ENCODE measurements at regions of chr12 and their contacts with region 1.

Region 1: DNA sequence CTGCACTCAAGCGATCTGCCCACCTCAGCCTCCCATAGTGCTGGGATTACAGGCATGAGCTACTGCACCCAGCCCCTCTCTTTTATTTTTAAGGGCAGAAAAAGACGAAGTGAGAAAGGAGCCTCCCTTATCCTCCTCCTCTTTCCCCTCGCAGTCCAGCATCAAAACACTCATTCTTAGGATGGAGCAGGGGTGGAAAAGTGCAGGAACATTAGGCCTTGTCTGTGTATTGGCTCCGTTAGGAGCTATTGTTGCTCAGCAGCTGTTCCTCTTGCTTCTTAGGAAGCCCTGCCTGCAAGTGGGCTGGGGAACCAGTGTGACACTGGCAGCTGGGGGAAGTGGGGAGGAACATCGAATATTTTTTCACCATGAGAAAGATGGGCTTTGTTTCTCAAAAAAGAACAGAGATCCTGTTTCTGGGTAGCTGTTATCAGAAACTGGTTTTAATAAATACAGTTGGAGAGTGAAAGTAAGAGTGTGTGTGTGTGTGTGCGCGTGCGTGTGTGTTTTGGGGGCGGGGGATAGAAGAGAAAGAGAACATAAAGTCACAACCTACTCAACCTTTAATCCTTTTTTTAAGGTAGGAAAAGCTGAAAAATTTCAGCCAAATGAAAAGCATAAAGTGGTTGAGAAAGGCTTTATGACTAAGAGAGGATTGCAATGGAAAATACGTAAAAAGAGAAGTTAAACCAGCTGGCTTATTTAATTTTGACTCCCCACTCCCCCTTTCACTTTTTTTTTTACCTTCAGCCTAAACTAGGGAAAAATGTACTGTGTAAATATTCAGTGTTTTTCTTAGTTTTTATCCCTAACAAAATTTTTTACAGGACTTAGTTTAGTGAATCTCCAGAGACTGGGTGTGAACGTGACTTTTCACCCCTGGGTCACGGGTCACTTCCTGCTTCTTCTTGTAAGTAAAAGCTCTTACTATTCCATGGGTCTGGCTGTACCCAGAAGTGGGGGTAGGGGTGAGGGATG is 197.2 kb upstream of the PLEKHG7 start:
- DNase-seq: peak; percentile 86
- ATAC-seq: peak; percentile 41
- H3K4me3 ChIP-seq: peak overlapping the region; percentile 46
- H3K27ac ChIP-seq: peak overlapping the region; percentile 100
- H3K4me1 ChIP-seq: peaks cover 53% of the 10 kb centered on the region
- H3K27me3 ChIP-seq: no peaks in the 10 kb centered on the region
- CTCF ChIP-seq: no peak
- EP300 ChIP-seq: peak; percentile 15 to 44; a peak in 2 of 4 replicates
- POLR2A ChIP-seq: peak; percentile 56; the same call in 1 of the 2 replicates
- RAD21 ChIP-seq: no peak

Region 2: DNA sequence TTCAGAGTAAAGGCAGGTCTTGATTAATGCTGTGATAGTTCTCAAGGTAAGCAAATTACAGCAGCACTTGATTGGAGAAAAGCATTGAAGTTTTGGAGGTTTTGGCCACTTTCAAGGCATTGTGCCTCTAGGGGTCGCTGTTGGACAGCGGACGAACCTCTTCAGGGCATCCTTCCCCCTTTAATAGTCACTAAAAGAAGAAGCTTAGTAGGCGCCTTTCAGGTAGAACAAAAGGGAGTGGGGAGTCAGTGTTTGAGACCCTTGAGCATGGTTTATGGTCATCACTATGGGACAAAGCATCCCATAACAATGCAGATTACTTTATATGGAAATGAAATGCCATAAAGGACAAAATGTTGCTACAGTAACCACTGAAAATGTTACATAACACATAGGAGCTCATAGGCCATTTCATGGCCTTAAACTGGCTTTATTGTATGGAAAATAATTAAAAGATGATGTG is 1123.4 kb before region 1 on chr12:
- CTCF ChIA-PET with region 1: interaction called, 6 read pairs
- POLR2A ChIA-PET with region 1: no interaction called
- RAD21 ChIA-PET with region 1: interaction called, 21 read pairs
- SMC1A ChIA-PET with region 1: interaction called, 3 read pairs
- in situ Hi-C with region 1: no loop called
- intact Hi-C with region 1: no loop called
- DNase-seq: peak; percentile 54
- ATAC-seq: peak; percentile 95
- H3K4me3 ChIP-seq: peak overlapping the region; percentile 68
- H3K27ac ChIP-seq: peak overlapping the region; percentile 37; the same call in 1 of the 2 replicates
- H3K4me1 ChIP-seq: peaks cover 3% of the 10 kb centered on the region; the same call in 1 of the 2 replicates
- H3K27me3 ChIP-seq: no peaks in the 10 kb centered on the region
- CTCF ChIP-seq: peak; percentile 80 to 89 (median 87)
- EP300 ChIP-seq: no peak
- POLR2A ChIP-seq: no peak
- RAD21 ChIP-seq: peak; percentile 92

Region 3: GRCh38 chr12:91998316-91998715 is 507.2 kb before region 1 on chr12:
- CTCF ChIA-PET with region 1: no interaction called
- POLR2A ChIA-PET with region 1: no interaction called
- RAD21 ChIA-PET with region 1: no interaction called
- SMC1A ChIA-PET with region 1: no interaction called
- in situ Hi-C with region 1: no loop called
- intact Hi-C with region 1: no loop called
- DNase-seq: no peak
- ATAC-seq: peak; percentile 49
- H3K4me3 ChIP-seq: no peak overlapping the region
- H3K27ac ChIP-seq: no peak overlapping the region
- H3K4me1 ChIP-seq: no peaks in the 10 kb centered on the region
- H3K27me3 ChIP-seq: no peaks in the 10 kb centered on the region
- CTCF ChIP-seq: no peak
- EP300 ChIP-seq: no peak
- POLR2A ChIP-seq: no peak
- RAD21 ChIP-seq: no peak

Region 4: GRCh38 chr12:92341065-92341668 is 164.4 kb before region 1 on chr12:
- CTCF ChIA-PET with region 1: no interaction called
- POLR2A ChIA-PET with region 1: no interaction called
- RAD21 ChIA-PET with region 1: no interaction called
- SMC1A ChIA-PET with region 1: no interaction called
- in situ Hi-C with region 1: no loop called
- intact Hi-C with region 1: no loop called
- DNase-seq: no peak
- ATAC-seq: peak; percentile 86
- H3K4me3 ChIP-seq: peak overlapping the region; percentile 46; the same call in 1 of the 2 replicates
- H3K27ac ChIP-seq: no peak overlapping the region
- H3K4me1 ChIP-seq: no peaks in the 10 kb centered on the region
- H3K27me3 ChIP-seq: no peaks in the 10 kb centered on the region
- CTCF ChIP-seq: no peak
- EP300 ChIP-seq: no peak
- POLR2A ChIP-seq: no peak
- RAD21 ChIP-seq: no peak

Region 5: DNA sequence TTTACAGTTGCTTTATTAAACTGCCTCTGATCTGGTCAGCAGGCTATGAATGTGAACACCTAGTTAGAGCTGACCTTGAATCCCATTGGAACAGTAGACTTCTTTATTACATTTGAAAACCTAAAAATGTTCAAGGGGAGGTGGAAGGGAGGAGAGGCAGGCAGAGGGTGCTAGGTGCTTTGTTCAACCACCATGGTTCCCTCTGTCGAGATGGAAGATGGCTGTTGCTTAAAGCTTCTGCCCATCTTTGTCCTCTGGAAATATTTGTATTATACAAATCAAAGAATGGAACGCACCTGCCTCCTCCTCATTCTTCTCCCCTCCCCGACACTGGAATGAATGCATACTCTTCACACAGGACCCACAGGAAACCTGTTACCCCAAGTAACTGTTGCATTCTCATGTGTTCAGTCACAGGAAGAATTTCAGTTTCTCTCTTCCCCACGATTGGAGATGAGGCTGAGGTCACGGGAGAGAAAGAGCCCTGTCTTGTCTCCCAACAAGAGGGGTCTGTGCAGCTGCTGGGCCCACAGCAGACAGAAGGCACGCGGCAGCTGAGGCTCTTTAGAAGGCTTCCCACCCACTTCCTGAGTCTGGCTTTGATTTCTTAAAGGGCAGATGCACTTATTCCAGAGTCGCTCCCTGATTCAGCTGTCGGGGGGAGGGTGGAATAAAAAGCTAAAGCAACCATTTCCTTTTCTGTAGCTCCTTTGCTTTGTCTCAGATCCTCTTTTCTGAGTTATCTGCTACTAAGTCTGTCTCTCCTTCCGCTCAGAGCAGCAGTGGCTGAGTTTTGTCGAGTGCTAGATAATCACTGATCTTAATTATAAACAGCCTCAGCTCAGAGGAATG is 142.0 kb before region 1 on chr12:
- CTCF ChIA-PET with region 1: interaction called, 7 read pairs
- POLR2A ChIA-PET with region 1: interaction called, 7 read pairs
- RAD21 ChIA-PET with region 1: interaction called, 43 read pairs
- SMC1A ChIA-PET with region 1: interaction called, 45 read pairs
- in situ Hi-C with region 1: no loop called
- intact Hi-C with region 1: loop called (anchors 2 kb)
- DNase-seq: peak; percentile 96
- ATAC-seq: peak; percentile 82
- H3K4me3 ChIP-seq: peak overlapping the region; percentile 62
- H3K27ac ChIP-seq: peak overlapping the region; percentile 99
- H3K4me1 ChIP-seq: peaks cover 17% of the 10 kb centered on the region; the same call in 1 of the 2 replicates
- H3K27me3 ChIP-seq: no peaks in the 10 kb centered on the region
- CTCF ChIP-seq: no peak
- EP300 ChIP-seq: peak; percentile 60 to 79; a peak in 3 of 4 replicates
- POLR2A ChIP-seq: peak; percentile 83
- RAD21 ChIP-seq: peak; percentile 12; the same call in 1 of the 2 replicates

Region 6: GRCh38 chr12:92445253-92446082 is 60.1 kb before region 1 on chr12:
- CTCF ChIA-PET with region 1: interaction called, 4 read pairs
- POLR2A ChIA-PET with region 1: interaction called, 5 read pairs
- RAD21 ChIA-PET with region 1: interaction called, 53 read pairs
- SMC1A ChIA-PET with region 1: interaction called, 68 read pairs
- in situ Hi-C with region 1: no loop called
- intact Hi-C with region 1: loop called (anchors 1 kb)
- DNase-seq: peak; percentile 97
- ATAC-seq: peak; percentile 90
- H3K4me3 ChIP-seq: peak overlapping the region; percentile 41
- H3K27ac ChIP-seq: peak overlapping the region; percentile 100
- H3K4me1 ChIP-seq: peaks cover 44% of the 10 kb centered on the region
- H3K27me3 ChIP-seq: no peaks in the 10 kb centered on the region
- CTCF ChIP-seq: no peak
- EP300 ChIP-seq: peak; percentile 89 to 91
- POLR2A ChIP-seq: peak; percentile 61
- RAD21 ChIP-seq: peak; percentile 32; the same call in 1 of the 2 replicates

Region 7: GRCh38 chr12:92485351-92486348 is 19.9 kb before region 1 on chr12:
- CTCF ChIA-PET with region 1: interaction called, 8 read pairs
- POLR2A ChIA-PET with region 1: interaction called, 20 read pairs
- RAD21 ChIA-PET with region 1: interaction called, 198 read pairs
- SMC1A ChIA-PET with region 1: interaction called, 292 read pairs
- in situ Hi-C with region 1: no loop called
- intact Hi-C with region 1: no loop called
- DNase-seq: no peak
- ATAC-seq: peak; percentile 58
- H3K4me3 ChIP-seq: no peak overlapping the region
- H3K27ac ChIP-seq: peak overlapping the region; percentile 90
- H3K4me1 ChIP-seq: peaks cover 53% of the 10 kb centered on the region
- H3K27me3 ChIP-seq: no peaks in the 10 kb centered on the region
- CTCF ChIP-seq: no peak
- EP300 ChIP-seq: no peak
- POLR2A ChIP-seq: no peak
- RAD21 ChIP-seq: no peak

Region 8: DNA sequence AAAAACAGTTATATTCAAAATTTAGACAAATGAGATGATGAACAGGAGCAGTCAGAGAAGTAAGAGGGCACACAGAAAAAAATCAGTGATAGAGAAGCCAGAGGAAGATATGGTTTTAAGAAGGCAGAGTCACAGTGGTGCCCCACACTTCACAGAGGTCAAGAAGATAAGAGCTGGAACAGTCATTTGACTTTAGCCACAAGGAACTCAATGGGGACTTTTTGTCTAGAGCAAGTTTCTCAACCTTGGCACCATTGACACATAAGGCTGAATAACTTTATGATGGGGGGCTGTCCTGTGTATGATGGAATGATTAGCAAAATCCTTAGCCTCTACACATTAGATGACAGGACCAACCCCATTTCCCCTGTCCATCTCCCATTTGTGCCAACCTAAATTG is 24.4 kb after region 1 on chr12:
- CTCF ChIA-PET with region 1: interaction called, 5 read pairs
- POLR2A ChIA-PET with region 1: interaction called, 10 read pairs
- RAD21 ChIA-PET with region 1: interaction called, 14 read pairs
- SMC1A ChIA-PET with region 1: interaction called, 36 read pairs
- in situ Hi-C with region 1: no loop called
- intact Hi-C with region 1: no loop called
- DNase-seq: no peak
- ATAC-seq: peak; percentile 84
- H3K4me3 ChIP-seq: no peak overlapping the region
- H3K27ac ChIP-seq: no peak overlapping the region
- H3K4me1 ChIP-seq: peaks cover 7% of the 10 kb centered on the region; the same call in 1 of the 2 replicates
- H3K27me3 ChIP-seq: no peaks in the 10 kb centered on the region
- CTCF ChIP-seq: no peak
- EP300 ChIP-seq: no peak
- POLR2A ChIP-seq: no peak
- RAD21 ChIP-seq: no peak

Region 9: DNA sequence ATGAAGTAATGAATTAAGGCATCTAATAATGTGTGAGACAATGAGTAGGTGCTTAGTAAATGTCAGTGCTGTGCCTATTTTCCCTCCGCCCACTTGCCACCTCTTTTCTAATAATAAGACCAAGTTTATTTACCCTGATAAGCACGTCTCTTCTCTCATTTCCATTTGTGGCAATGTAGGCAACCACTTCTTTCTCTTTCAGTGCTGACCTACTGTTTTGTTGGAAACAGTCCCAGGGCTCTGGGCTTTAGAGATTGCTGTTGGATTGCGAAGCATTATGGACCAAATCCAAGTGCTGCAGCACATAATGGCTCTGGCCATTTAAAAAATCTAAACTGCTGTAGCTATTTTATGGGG is 56.0 kb after region 1 on chr12:
- CTCF ChIA-PET with region 1: interaction called, 179 read pairs
- POLR2A ChIA-PET with region 1: interaction called, 170 read pairs
- RAD21 ChIA-PET with region 1: interaction called, 356 read pairs
- SMC1A ChIA-PET with region 1: interaction called, 805 read pairs
- in situ Hi-C with region 1: no loop called
- intact Hi-C with region 1: no loop called
- DNase-seq: no peak
- ATAC-seq: peak; percentile 13
- H3K4me3 ChIP-seq: peak overlapping the region; percentile 50; the same call in 1 of the 2 replicates
- H3K27ac ChIP-seq: peak overlapping the region; percentile 36
- H3K4me1 ChIP-seq: peaks cover 32% of the 10 kb centered on the region
- H3K27me3 ChIP-seq: no peaks in the 10 kb centered on the region
- CTCF ChIP-seq: no peak
- EP300 ChIP-seq: peak in 1 of 2 experiments; percentile 35; a peak in 1 of 4 replicates
- POLR2A ChIP-seq: no peak
- RAD21 ChIP-seq: no peak